PC-3 (cell line): ENCODE measurements at regions of chr2 and their contacts with region 1.

Region 1: DNA sequence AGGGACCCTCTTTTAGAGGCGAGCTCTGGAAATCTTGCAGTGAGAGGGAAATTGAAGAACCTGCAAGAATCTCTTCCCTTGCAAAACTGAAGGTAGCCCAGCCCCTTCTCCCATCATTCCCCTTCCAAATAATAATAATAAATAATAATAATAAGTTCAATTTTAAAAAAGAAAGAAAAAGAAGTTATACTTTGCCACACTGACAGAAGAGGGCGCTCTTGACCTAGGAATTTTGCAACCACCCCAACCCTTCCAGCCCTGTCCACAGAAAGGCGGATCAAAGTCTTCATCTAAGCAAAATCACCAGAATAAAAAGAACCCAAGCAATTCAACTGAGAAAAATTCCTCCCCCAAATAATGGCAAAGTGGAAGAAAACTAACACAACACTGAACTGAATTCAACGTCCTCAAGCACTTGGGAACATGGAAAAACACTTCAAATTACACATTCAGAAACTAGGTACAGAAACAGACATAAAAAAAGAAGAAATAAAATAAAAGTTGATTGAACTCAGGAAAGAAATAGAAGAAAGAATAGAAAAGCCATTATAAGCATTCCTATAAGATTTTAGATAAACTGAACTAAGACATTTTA is 98.9 kb upstream of the GLS start:
- DNase-seq: peak; percentile 72
- ATAC-seq: peak; percentile 80
- H3K4me3 ChIP-seq: no peak overlapping the region
- H3K27ac ChIP-seq: no peak overlapping the region
- H3K4me1 ChIP-seq: peaks cover 13% of the 10 kb centered on the region
- H3K27me3 ChIP-seq: no peaks in the 10 kb centered on the region
- CTCF ChIP-seq: peak; percentile 58

Region 2: DNA sequence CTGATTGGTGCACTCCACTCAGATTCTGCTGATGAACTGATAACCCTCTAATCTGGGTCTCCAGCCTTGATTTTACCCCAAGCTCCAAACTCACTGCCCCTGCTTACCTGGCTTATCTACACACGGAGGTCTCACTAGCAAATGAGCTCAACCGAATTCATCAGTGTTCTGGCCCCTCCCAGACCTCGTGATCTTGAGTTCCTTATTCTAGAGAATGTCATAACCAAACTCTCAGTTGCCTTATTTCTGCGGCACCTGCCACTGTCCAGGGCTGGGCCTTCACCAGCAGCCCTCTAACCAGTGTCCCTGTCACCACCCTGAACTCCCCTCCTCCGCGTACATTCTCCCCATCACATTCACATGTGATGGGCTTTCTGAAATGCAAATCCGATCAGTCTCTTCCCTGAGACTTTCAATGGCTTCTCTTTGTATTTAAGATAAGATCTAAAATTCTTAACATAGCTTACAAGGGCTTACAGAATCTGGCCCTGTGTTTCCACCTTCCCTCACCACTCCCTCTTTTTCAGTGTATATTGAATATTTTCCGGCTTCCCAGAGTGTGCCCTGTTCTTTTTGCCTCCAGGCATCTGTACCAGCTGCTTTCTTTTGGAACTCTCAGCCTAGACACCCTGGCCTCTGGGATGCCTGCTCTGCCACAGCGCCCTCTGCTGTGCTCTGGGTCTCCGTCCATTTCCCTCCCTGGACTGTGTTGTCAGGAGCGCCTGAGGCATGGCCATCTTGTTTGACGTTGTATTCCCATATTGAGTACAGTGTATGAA is 101.7 kb before region 1 on chr2:
- CTCF ChIA-PET with region 1: no interaction called
- POLR2A ChIA-PET with region 1: no interaction called
- intact Hi-C with region 1: no loop called
- DNase-seq: peak; percentile 41
- ATAC-seq: peak; percentile 45; the same call in 1 of the 2 replicates
- H3K4me3 ChIP-seq: no peak overlapping the region
- H3K27ac ChIP-seq: no peak overlapping the region
- H3K4me1 ChIP-seq: peaks cover 8% of the 10 kb centered on the region
- H3K27me3 ChIP-seq: no peaks in the 10 kb centered on the region
- CTCF ChIP-seq: peak; percentile 68

Region 3: DNA sequence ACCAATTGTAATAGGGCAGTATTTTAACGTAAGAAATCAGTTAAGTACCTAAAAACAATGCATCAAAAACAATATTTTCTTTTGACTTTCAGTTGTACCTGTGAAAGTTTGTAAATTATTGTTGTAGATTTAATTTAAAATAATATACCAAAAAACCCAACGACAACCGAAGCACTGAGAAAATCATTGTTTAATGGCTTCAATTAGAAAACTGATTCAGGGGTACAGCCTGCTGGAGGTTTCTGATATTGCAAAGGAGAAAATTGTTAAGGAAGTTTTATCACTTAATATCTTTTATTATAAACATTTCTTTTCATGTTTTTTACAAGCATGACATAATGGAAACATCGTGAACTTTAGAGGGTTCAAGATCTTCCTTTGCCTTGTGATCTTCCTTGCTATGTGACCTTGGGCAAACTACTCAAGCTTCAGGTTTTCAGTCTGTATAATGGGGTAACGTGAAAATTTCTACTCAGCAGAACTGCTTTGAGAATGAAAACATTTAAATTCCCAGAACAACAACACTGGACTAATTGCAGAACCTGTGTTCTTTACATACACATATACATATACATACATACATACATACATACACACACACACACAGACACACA is 22.6 kb after region 1 on chr2:
- CTCF ChIA-PET with region 1: no interaction called
- POLR2A ChIA-PET with region 1: no interaction called
- intact Hi-C with region 1: loop called (anchors 1 kb)
- DNase-seq: peak; percentile 69
- ATAC-seq: no peak
- H3K4me3 ChIP-seq: no peak overlapping the region
- H3K27ac ChIP-seq: no peak overlapping the region
- H3K4me1 ChIP-seq: peaks cover 4% of the 10 kb centered on the region
- H3K27me3 ChIP-seq: no peaks in the 10 kb centered on the region
- CTCF ChIP-seq: peak; percentile 79

Region 4: DNA sequence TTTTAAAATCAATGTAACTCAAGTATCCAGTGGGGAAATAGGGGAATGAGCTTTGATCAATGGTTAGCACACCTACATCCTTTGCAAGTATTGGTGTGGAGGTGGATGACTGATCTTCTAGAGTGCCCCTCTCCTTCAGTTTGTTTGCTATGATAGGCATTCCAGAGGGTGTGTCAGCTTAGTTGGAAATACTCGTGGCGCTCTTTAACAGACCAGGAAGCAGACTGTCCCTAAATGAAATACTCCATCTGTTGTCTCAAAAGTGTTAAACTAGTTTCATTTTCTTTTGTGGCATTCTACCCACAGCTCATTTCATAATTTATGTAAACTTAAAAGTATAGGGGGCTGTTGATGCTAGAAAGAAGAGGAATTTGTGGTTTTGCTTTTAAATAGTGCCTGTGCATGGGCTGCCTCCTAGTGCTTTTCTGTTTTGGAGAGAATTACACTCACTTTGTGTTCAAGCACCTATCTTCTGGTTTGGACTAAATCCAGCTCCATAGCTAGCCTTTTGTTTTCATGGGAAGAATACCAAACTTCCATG is 166.1 kb after region 1 on chr2:
- CTCF ChIA-PET with region 1: no interaction called
- POLR2A ChIA-PET with region 1: no interaction called
- intact Hi-C with region 1: loop called (anchors 5 kb)
- DNase-seq: peak; percentile 66
- ATAC-seq: peak; percentile 74
- H3K4me3 ChIP-seq: peak overlapping the region; percentile 26; the same call in 1 of the 2 replicates
- H3K27ac ChIP-seq: peak overlapping the region; percentile 4; the same call in 1 of the 2 replicates
- H3K4me1 ChIP-seq: peaks cover 28% of the 10 kb centered on the region
- H3K27me3 ChIP-seq: no peaks in the 10 kb centered on the region
- CTCF ChIP-seq: peak; percentile 37; the same call in 1 of the 2 replicates

Region 5: GRCh38 chr2:191013932-191014652 is 232.4 kb after region 1 on chr2 and contains the start of gene STAT1:
- CTCF ChIA-PET with region 1: no interaction called
- POLR2A ChIA-PET with region 1: no interaction called
- intact Hi-C with region 1: no loop called
- DNase-seq: peak; percentile 94
- ATAC-seq: peak; percentile 86
- H3K4me3 ChIP-seq: peak within 1 kb of the TSS; percentile 89
- H3K27ac ChIP-seq: peak within 1 kb of the TSS; percentile 43
- H3K4me1 ChIP-seq: peaks cover 24% of the 10 kb centered on the region
- H3K27me3 ChIP-seq: no peaks in the 10 kb centered on the region
- CTCF ChIP-seq: no peak
- total RNA-seq, gene STAT1: 45.6 and 47.9 TPM in 2 replicates

Region 6: GRCh38 chr2:191030521-191031154 is 248.9 kb after region 1 on chr2:
- CTCF ChIA-PET with region 1: no interaction called
- POLR2A ChIA-PET with region 1: no interaction called
- intact Hi-C with region 1: loop called (anchors 1 kb)
- DNase-seq: peak; percentile 64
- ATAC-seq: peak; percentile 85
- H3K4me3 ChIP-seq: no peak overlapping the region
- H3K27ac ChIP-seq: no peak overlapping the region
- H3K4me1 ChIP-seq: no peaks in the 10 kb centered on the region
- H3K27me3 ChIP-seq: no peaks in the 10 kb centered on the region
- CTCF ChIP-seq: peak; percentile 78

Region 7: GRCh38 chr2:191150600-191151330 is 369.1 kb after region 1 on chr2 and contains the start of gene STAT4:
- CTCF ChIA-PET with region 1: no interaction called
- POLR2A ChIA-PET with region 1: no interaction called
- intact Hi-C with region 1: loop called (anchors 10 kb)
- DNase-seq: peak; percentile 57
- ATAC-seq: peak; percentile 77
- H3K4me3 ChIP-seq: peak within 1 kb of the TSS; percentile 71
- H3K27ac ChIP-seq: no peak within 1 kb of the TSS
- H3K4me1 ChIP-seq: peaks cover 5% of the 10 kb centered on the region; the same call in 1 of the 2 replicates
- H3K27me3 ChIP-seq: no peaks in the 10 kb centered on the region
- CTCF ChIP-seq: no peak
- total RNA-seq, gene STAT4: 1.6 and 2.2 TPM in 2 replicates